ENCODE measurements at regions of chr2 and their contacts with region 1.

Region 1: DNA sequence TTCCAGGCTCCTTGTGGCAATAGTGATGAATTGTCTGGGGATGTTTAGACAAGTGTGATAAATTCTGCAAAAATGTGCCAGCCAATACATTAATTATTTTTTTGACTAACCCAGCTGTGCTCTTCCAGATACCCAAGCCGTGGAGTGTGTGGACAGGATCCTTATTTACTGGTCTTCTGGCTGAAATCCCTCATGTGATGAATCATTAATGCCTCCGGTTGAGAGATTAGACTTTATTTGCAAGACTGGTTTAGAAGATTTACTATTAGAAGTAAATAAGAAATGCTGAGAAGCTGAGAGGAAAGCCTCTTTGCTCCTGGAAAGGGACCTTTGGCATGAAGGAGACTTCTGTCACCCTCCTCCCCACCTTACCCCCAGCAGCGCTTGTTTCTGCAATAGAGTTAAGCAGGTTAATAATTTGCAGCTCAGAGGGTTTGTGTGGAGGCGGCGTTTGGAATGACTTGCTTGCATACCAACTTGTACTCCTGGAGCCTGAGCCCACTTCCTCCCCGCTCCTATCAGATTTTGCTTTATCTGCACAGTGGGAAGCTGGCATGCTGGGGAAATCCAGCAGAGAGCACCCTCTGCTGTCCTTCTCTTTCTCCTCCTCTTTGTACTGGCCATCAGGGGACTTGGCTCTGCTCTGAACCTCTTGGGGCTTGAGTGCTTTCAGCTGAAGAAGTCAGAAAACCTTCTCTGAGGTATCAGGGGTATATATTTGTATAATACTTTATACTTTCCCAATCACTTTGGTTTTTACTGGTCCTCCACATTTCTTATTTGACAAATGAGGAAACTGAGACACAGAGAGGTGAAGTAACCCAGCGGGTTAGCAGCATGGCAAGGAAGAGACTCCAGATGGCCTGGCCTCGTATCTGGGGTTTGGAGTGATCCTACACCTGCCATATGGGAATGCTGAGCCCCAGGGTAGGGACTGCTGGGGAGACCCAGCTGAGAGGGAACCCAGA is 16.3 kb downstream of the SLC3A1 start:
- DNase-seq: peak; percentile 81 to 99
- ATAC-seq: peak; percentile 93
- H3K4me3 ChIP-seq: peak overlapping the region; percentile 16; the same call in 1 of the 3 replicates
- H3K27ac ChIP-seq: peak overlapping the region; percentile 92 to 96
- H3K4me1 ChIP-seq: peaks cover 69% of the 10 kb centered on the region
- CTCF ChIP-seq: peak; percentile 98
- EP300 ChIP-seq: peak; percentile 91 to 93
- POLR2A ChIP-seq: no peak
- RAD21 ChIP-seq: peak; percentile 99

Region 2: DNA sequence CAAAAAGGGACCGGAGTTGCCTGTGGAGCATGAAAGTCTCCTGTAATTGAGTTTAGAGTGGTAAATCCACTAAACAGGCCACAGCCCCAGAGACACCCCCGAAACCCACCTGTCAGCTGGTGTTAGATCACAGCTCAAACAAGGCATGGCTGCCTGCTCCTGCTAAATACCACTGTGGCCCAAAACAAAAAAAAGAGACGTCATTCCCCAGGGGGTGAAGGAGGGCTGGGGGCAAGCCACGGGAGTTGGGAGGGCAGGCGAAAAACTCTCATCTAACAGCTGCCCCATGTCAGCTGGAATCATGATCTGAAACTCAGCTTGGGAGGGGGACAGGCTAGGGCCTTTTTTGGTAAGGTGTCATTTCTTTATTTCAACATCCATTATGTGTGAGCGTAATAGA is 253.3 kb before region 1 on chr2:
- CTCF ChIA-PET with region 1: interaction called, 11 read pairs
- POLR2A ChIA-PET with region 1: no interaction called
- DNase-seq: no peak
- ATAC-seq: no peak
- H3K4me3 ChIP-seq: no peak overlapping the region
- H3K27ac ChIP-seq: no peak overlapping the region
- H3K4me1 ChIP-seq: no peaks in the 10 kb centered on the region
- CTCF ChIP-seq: no peak
- EP300 ChIP-seq: no peak
- POLR2A ChIP-seq: no peak
- RAD21 ChIP-seq: no peak

Region 3: DNA sequence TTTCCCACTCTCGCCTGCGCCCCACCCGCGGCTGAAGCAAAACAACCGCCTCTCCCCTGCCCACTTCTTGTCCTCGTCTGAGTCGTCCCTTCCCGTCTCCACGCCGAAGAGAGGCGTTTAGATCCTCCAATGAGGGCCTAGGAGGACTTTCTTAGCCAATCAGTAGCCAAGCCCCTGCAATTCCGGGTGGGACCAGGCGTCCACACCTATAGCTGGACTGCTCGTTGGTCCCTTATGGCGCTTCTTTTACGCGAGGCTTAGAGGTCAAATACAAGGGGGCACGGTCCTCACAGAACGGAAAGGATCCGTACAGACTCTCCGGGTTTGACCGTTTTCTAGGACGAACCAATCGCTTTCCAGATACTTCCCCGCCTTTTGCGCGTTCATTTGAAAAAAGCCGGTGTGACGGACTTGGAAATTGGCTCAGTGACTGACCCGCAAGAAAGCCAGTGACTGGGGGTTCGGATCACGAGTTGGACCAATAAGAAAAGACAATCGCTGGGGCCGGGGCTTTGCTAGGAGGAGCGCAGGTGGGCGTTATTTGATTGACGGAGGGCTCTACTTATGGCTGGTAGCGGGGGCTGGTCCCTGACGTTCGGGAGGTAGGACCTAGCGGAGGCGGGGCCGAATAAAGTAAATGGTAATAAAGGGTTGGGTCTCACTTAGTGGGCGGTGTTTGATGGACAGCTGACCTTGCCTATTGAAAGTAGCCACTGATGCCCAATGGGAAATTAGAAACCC is 123.5 kb before region 1 on chr2:
- CTCF ChIA-PET with region 1: interaction called, 14 read pairs
- POLR2A ChIA-PET with region 1: interaction called, 4 read pairs
- DNase-seq: peak; percentile 99 to 100
- ATAC-seq: peak; percentile 87 to 93
- H3K4me3 ChIP-seq: peak overlapping the region; percentile 49
- H3K27ac ChIP-seq: peak overlapping the region; percentile 75 to 82
- H3K4me1 ChIP-seq: peaks cover 26% of the 10 kb centered on the region
- CTCF ChIP-seq: no peak
- EP300 ChIP-seq: no peak
- POLR2A ChIP-seq: no peak; the same call in 1 of the 2 replicates
- RAD21 ChIP-seq: no peak

Region 4: GRCh38 chr2:44267796-44268648 is 23.5 kb before region 1 on chr2:
- CTCF ChIA-PET with region 1: interaction called, 53 read pairs
- POLR2A ChIA-PET with region 1: interaction called, 4 read pairs
- DNase-seq: peak in 1 of 2 experiments; percentile 68
- ATAC-seq: peak; percentile 55 to 66; a peak in 5 of 6 replicates
- H3K4me3 ChIP-seq: no peak overlapping the region
- H3K27ac ChIP-seq: peak overlapping the region; percentile 31 to 64; a peak in 5 of 6 replicates
- H3K4me1 ChIP-seq: peaks cover 25% of the 10 kb centered on the region
- CTCF ChIP-seq: no peak
- EP300 ChIP-seq: no peak
- POLR2A ChIP-seq: no peak
- RAD21 ChIP-seq: no peak

Region 5: DNA sequence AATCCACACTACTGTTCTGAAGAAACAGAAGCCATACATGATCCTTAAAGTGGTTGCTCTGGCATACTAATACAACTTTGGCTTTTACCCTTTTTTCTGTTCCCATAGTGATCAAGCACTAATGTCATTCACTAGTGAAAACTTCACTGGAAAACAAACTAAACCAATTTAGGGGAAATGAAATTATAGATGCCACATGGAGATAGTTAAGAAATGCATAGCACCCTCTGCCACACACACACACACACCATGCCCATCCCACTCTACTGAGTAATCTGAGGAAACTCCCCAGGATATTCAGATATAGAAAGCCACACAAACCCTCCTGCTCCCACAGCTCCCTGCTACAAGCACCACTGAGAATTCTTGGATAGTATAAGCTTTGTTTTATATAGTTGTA is 22.8 kb after region 1 on chr2:
- CTCF ChIA-PET with region 1: interaction called, 10 read pairs
- POLR2A ChIA-PET with region 1: no interaction called
- DNase-seq: no peak
- ATAC-seq: no peak
- H3K4me3 ChIP-seq: no peak overlapping the region
- H3K27ac ChIP-seq: no peak overlapping the region
- H3K4me1 ChIP-seq: no peaks in the 10 kb centered on the region
- CTCF ChIP-seq: no peak
- EP300 ChIP-seq: no peak
- POLR2A ChIP-seq: no peak
- RAD21 ChIP-seq: no peak

Region 6: GRCh38 chr2:44361330-44362206 is 70.0 kb after region 1 on chr2 and contains the starts of genes CAMKMT and PREPL:
- CTCF ChIA-PET with region 1: interaction called, 10 read pairs
- POLR2A ChIA-PET with region 1: interaction called, 5 read pairs
- DNase-seq: peak; percentile 96 to 99
- ATAC-seq: peak; percentile 88 to 91
- H3K4me3 ChIP-seq: peak within 1 kb of the TSS; percentile 77
- H3K27ac ChIP-seq: peak within 1 kb of the TSS; percentile 93 to 94
- H3K4me1 ChIP-seq: peaks cover 20% of the 10 kb centered on the region
- CTCF ChIP-seq: no peak
- EP300 ChIP-seq: no peak
- POLR2A ChIP-seq: peak; percentile 92
- RAD21 ChIP-seq: no peak
- polyA plus RNA-seq, gene CAMKMT: 10.0 and 15.7 TPM in 2 replicates
- polyA plus RNA-seq, gene PREPL: 78.8 and 92.7 TPM in 2 replicates

Region 7: DNA sequence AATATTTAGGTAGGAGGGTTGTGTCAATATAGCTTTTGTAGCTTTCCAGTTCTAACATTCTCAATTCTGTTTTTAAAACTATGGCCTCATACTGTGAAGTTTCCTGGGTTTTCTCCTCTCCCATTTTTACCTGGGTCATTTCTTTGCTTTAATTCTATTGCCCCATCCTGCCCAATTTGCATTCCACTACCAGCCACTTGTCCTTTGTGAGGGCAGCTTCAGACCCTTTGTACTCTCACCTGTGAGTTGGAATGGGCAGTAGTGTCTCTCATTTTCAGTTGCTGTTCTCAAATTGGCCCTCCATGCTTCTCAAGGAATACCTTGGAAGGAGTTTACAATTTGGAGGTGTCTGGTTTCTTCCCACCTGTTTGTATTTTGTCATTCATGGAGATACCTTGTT is 178.6 kb after region 1 on chr2:
- CTCF ChIA-PET with region 1: no interaction called
- POLR2A ChIA-PET with region 1: no interaction called
- DNase-seq: no peak
- ATAC-seq: no peak
- H3K4me3 ChIP-seq: no peak overlapping the region
- H3K27ac ChIP-seq: no peak overlapping the region
- H3K4me1 ChIP-seq: no peaks in the 10 kb centered on the region
- CTCF ChIP-seq: no peak
- EP300 ChIP-seq: no peak
- POLR2A ChIP-seq: no peak
- RAD21 ChIP-seq: no peak

Measured in A549 (cell line).